Transverse colon (tissue), 4 donors: ENCODE measurements at regions of chr7 and their contacts with region 1.

Region 1: GRCh38 chr7:101436857-101437576 is 74.3 kb downstream of the COL26A1 start:
- DNase-seq: peak; percentile 16
- H3K4me3 ChIP-seq: no peak overlapping the region
- H3K27ac ChIP-seq: no peak overlapping the region
- H3K4me1 ChIP-seq: no peaks in the 10 kb centered on the region
- H3K27me3 ChIP-seq: peaks cover 50% of the 10 kb centered on the region
- CTCF ChIP-seq: no peak
- EP300 ChIP-seq: no peak
- POLR2A ChIP-seq: no peak

Region 2: GRCh38 chr7:101507791-101508252 is 70.8 kb after region 1 on chr7:
- in situ Hi-C with region 1: no loop called
- intact Hi-C with region 1: loop called (anchors 2 kb)
- DNase-seq: peak; percentile 14
- H3K4me3 ChIP-seq: no peak overlapping the region
- H3K27ac ChIP-seq: no peak overlapping the region
- H3K4me1 ChIP-seq: no peaks in the 10 kb centered on the region
- H3K27me3 ChIP-seq: peaks cover 58% of the 10 kb centered on the region
- CTCF ChIP-seq: peak; percentile 33 to 51 (median 38)
- EP300 ChIP-seq: no peak
- POLR2A ChIP-seq: no peak